ENCODE measurements at regions of chr10 and their contacts with region 1.

Region 1: DNA sequence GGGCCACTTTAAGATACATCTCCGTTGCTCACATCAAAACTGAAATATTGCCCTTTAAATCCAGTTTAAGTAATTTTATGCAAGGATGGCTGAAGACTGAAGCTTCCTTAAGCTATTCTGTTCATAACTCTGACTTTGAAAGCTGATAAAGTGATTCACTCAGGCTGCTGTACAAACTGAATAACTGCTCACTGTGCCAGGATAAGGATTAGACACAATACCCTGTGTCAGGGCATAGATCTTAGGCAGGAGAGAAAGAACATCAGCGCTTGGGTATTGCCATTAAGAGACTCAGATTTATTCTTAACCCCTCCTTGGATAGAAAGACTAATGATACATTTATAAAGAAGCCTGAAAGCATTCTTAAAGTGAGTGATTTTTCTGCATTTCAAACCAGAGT is 614.5 kb upstream of the ZWINT start:
- DNase-seq: no peak
- H3K4me3 ChIP-seq: no peak overlapping the region
- H3K27ac ChIP-seq: no peak overlapping the region
- H3K4me1 ChIP-seq: no peaks in the 10 kb centered on the region
- H3K27me3 ChIP-seq: no peaks in the 10 kb centered on the region
- CTCF ChIP-seq: no peak
- POLR2A ChIP-seq: no peak

Region 2: GRCh38 chr10:58054881-58055280 is 1079.4 kb after region 1 on chr10:
- intact Hi-C with region 1: loop called (anchors 5 kb)
- DNase-seq: no peak
- H3K4me3 ChIP-seq: no peak overlapping the region
- H3K27ac ChIP-seq: no peak overlapping the region
- H3K4me1 ChIP-seq: no peaks in the 10 kb centered on the region
- H3K27me3 ChIP-seq: no peaks in the 10 kb centered on the region
- CTCF ChIP-seq: no peak
- POLR2A ChIP-seq: no peak

Measured in vagina (tissue), 2 donors.